T-cell (primary cell): ENCODE measurements at regions of chr11 and their contacts with region 1.

Region 1: GRCh38 chr11:126186708-126187529 is 24.5 kb downstream of the RPUSD4 start:
- DNase-seq: no peak
- ATAC-seq: no peak
- H3K4me3 ChIP-seq: no peak overlapping the region
- H3K4me3 Mint-ChIP-seq: no peak overlapping the region
- H3K27ac ChIP-seq: no peak overlapping the region
- H3K27ac Mint-ChIP-seq: no peak overlapping the region
- H3K4me1 ChIP-seq: peaks cover 0 to 2% of the 10 kb centered on the region in 2 experiments
- H3K4me1 Mint-ChIP-seq: peaks cover 2 to 7% (median 5%) of the 10 kb centered on the region in 3 donors
- H3K27me3 ChIP-seq: peaks cover 0 to 2% of the 10 kb centered on the region in 2 experiments
- H3K27me3 Mint-ChIP-seq: no peaks in the 10 kb centered on the region

Region 2: DNA sequence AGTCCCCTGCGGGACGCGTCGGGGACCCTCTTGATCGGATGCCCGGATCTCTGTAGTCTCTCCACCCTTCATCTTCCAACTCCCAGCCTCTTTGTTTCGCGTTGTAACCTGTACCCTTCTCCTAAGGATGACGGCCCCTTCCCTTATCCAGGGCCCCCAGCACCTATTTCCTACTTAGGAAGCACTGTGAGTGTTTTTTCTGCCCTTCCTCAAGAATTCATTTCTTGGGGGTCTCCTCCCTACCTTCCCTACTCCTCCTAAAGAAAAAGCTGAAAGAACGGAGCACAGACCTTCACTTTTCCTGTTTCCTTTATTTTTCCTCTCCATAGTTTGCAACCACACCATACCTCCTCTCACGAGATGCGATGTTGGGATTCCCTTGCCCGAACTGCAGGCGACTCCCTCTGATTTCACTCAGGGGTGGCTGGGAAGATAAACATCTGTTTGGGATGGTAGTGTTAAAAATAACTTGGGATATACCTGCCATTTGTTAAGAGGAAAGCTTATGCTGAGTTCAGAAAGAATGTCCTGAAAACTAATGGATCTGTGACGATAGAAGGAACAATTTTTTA is 25.3 kb after region 1 on chr11:
- CTCF ChIA-PET with region 1: no interaction called
- POLR2A ChIA-PET with region 1: interaction called in 1 of 2 experiments, 10 read pairs
- DNase-seq: no peak
- ATAC-seq: no peak
- H3K4me3 ChIP-seq: peak overlapping the region; percentile 94 to 96
- H3K4me3 Mint-ChIP-seq: peak overlapping the region; percentile 89 to 99 (median 99)
- H3K27ac ChIP-seq: no peak overlapping the region
- H3K27ac Mint-ChIP-seq: peak overlapping the region in 1 of 2 donors; percentile 97
- H3K4me1 ChIP-seq: peaks cover 9 to 14% of the 10 kb centered on the region in 2 experiments
- H3K4me1 Mint-ChIP-seq: peaks cover 38 to 41% (median 39%) of the 10 kb centered on the region in 3 donors
- H3K27me3 ChIP-seq: no peaks in the 10 kb centered on the region
- H3K27me3 Mint-ChIP-seq: no peaks in the 10 kb centered on the region

Region 3: DNA sequence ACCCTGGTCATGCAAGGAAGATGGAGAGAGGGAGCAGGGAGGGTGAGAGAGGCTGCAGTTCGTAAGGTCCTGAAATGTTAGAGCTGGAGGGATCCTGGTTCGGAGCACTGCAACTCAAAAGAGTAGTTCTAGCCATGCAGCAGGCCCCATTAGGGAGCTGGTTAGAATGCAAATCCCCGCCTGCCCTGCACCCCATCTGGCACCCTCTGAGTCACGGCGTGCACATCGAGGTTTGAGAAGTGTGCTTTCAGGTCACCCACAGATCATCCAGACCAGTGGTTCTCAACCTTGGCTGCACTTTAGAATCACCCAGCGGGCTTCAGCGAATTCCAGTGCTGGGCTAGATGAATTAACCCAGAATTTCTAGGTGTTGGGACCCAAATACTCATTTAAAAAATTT is 216.7 kb after region 1 on chr11:
- CTCF ChIA-PET with region 1: no interaction called
- POLR2A ChIA-PET with region 1: no interaction called
- DNase-seq: no peak
- ATAC-seq: no peak
- H3K4me3 ChIP-seq: no peak overlapping the region
- H3K4me3 Mint-ChIP-seq: no peak overlapping the region
- H3K27ac ChIP-seq: no peak overlapping the region
- H3K27ac Mint-ChIP-seq: no peak overlapping the region
- H3K4me1 ChIP-seq: no peaks in the 10 kb centered on the region
- H3K4me1 Mint-ChIP-seq: peaks cover 0 to 4% (median 0%) of the 10 kb centered on the region in 3 donors
- H3K27me3 ChIP-seq: no peaks in the 10 kb centered on the region
- H3K27me3 Mint-ChIP-seq: no peaks in the 10 kb centered on the region